CD8-positive, alpha-beta T cell (primary cell): ENCODE measurements at regions of chr20 and their contacts with region 1.

Region 1: GRCh38 chr20:62386383-62387218 is at the start of gene RPS21:
- DNase-seq: peak; percentile 86 to 97 (median 94)
- ATAC-seq: peak; percentile 88
- H3K4me3 ChIP-seq: peak within 1 kb of the TSS; percentile 93 to 96
- H3K4me3 Mint-ChIP-seq: peak within 1 kb of the TSS; percentile 91
- H3K27ac ChIP-seq: peak within 1 kb of the TSS; percentile 96 to 98
- H3K27ac Mint-ChIP-seq: peak within 1 kb of the TSS; percentile 95
- H3K4me1 ChIP-seq: peaks cover 37% of the 10 kb centered on the region
- H3K4me1 Mint-ChIP-seq: peaks cover 44% of the 10 kb centered on the region
- H3K27me3 ChIP-seq: no peaks in the 10 kb centered on the region
- H3K27me3 Mint-ChIP-seq: no peaks in the 10 kb centered on the region
- CTCF ChIP-seq: no peak
- total RNA-seq, gene RPS21: 3,441 to 3,445 TPM

Region 2: GRCh38 chr20:62065669-62066338 is 320.8 kb before region 1 on chr20 and contains the start of gene TAF4:
- CTCF ChIA-PET with region 1: no interaction called
- POLR2A ChIA-PET with region 1: no interaction called
- intact Hi-C with region 1: loop called in 1 of 2 experiments (anchors 5 kb)
- DNase-seq: peak; percentile 69 to 92 (median 79)
- ATAC-seq: peak; percentile 77
- H3K4me3 ChIP-seq: peak within 1 kb of the TSS; percentile 54 to 70
- H3K4me3 Mint-ChIP-seq: peak within 1 kb of the TSS; percentile 90
- H3K27ac ChIP-seq: peak within 1 kb of the TSS; percentile 47 to 74
- H3K27ac Mint-ChIP-seq: peak within 1 kb of the TSS; percentile 95
- H3K4me1 ChIP-seq: peaks cover 42% of the 10 kb centered on the region
- H3K4me1 Mint-ChIP-seq: peaks cover 52% of the 10 kb centered on the region
- H3K27me3 ChIP-seq: no peaks in the 10 kb centered on the region
- H3K27me3 Mint-ChIP-seq: no peaks in the 10 kb centered on the region
- CTCF ChIP-seq: no peak
- total RNA-seq, gene TAF4: 9.8 to 14.1 TPM

Region 3: GRCh38 chr20:62182613-62183425 is 203.8 kb before region 1 on chr20 and contains the start of gene MTG2:
- CTCF ChIA-PET with region 1: no interaction called
- POLR2A ChIA-PET with region 1: no interaction called
- intact Hi-C with region 1: loop called (anchors 2 kb)
- DNase-seq: peak; percentile 85 to 98 (median 95)
- ATAC-seq: peak; percentile 92
- H3K4me3 ChIP-seq: peak within 1 kb of the TSS; percentile 82 to 89
- H3K4me3 Mint-ChIP-seq: peak within 1 kb of the TSS; percentile 95
- H3K27ac ChIP-seq: peak within 1 kb of the TSS; percentile 89 to 93
- H3K27ac Mint-ChIP-seq: peak within 1 kb of the TSS; percentile 98
- H3K4me1 ChIP-seq: peaks cover 17% of the 10 kb centered on the region
- H3K4me1 Mint-ChIP-seq: peaks cover 43% of the 10 kb centered on the region
- H3K27me3 ChIP-seq: no peaks in the 10 kb centered on the region
- H3K27me3 Mint-ChIP-seq: no peaks in the 10 kb centered on the region
- CTCF ChIP-seq: no peak
- total RNA-seq, gene MTG2: 7.7 to 8.8 TPM

Region 4: DNA sequence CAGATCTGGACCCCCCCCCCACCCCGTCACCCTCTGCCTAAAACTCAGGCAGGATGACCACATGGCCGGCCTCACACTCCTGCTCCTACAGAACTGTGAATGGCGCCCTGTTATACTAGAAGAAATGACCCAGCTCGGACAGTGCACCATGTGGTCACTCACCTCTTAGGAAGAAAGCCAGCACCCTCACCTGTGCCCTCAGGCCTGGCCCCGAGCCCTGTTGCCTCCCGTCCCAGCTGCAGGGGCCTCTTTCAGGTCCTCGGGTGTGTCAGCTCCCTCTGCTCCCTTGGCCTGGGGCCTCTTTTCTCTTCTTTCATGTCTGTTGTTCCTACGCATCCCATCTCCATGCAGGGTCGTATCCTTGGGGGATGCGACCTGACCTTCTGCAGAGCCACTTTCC is 124.5 kb before region 1 on chr20:
- CTCF ChIA-PET with region 1: no interaction called
- POLR2A ChIA-PET with region 1: no interaction called
- intact Hi-C with region 1: no loop called
- DNase-seq: no peak
- ATAC-seq: no peak
- H3K4me3 ChIP-seq: no peak overlapping the region
- H3K4me3 Mint-ChIP-seq: no peak overlapping the region
- H3K27ac ChIP-seq: no peak overlapping the region
- H3K27ac Mint-ChIP-seq: no peak overlapping the region
- H3K4me1 ChIP-seq: no peaks in the 10 kb centered on the region
- H3K4me1 Mint-ChIP-seq: no peaks in the 10 kb centered on the region
- H3K27me3 ChIP-seq: no peaks in the 10 kb centered on the region
- H3K27me3 Mint-ChIP-seq: no peaks in the 10 kb centered on the region
- CTCF ChIP-seq: no peak

Region 5: DNA sequence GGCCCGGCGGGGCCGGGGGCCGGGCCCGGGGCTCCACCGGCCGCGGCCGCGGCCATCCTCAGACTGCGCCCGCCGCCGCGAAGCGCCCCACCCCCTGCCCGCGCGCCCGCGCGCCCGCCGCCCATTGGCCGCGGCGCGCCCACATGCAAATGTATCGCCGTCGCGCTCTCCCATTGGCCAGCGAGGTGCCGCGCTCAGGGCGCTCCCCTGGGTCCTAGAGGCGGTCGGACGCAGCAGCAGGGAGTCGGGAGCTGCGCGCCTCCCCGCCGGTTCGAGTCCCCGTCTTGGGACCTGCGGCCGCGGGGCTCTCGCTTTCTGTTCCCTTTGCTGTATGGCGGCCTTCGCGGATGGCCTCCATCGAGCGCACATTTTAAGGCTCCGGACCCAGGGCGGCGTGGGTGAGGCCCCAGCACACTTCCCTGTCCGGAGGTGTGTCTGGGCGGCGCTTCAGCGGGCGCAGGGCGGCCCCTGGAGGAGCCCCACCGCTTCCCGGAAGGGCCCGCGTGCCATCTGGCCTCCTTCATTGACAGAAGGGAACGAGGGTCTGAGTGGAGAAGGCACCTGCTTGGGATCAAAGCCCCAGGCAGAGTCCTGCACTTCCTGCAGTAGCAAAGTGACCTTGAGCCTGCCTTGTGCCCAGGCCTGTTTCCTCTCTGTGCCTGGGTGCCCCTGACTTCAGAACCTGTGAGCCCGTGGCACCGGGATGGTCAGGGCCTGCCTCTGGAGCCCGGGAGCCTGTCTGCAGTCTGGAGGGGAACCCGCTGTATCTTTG is 20.8 kb after region 1 on chr20 and contains the start of gene CABLES2:
- CTCF ChIA-PET with region 1: no interaction called
- POLR2A ChIA-PET with region 1: no interaction called
- intact Hi-C with region 1: loop called (anchors 1 kb)
- DNase-seq: peak; percentile 79 to 96 (median 90)
- ATAC-seq: peak; percentile 96
- H3K4me3 ChIP-seq: peak within 1 kb of the TSS; percentile 65 to 72
- H3K4me3 Mint-ChIP-seq: peak within 1 kb of the TSS; percentile 74
- H3K27ac ChIP-seq: peak within 1 kb of the TSS; percentile 33 to 54
- H3K27ac Mint-ChIP-seq: peak within 1 kb of the TSS; percentile 18
- H3K4me1 ChIP-seq: peaks cover 22% of the 10 kb centered on the region
- H3K4me1 Mint-ChIP-seq: peaks cover 26% of the 10 kb centered on the region
- H3K27me3 ChIP-seq: no peaks in the 10 kb centered on the region
- H3K27me3 Mint-ChIP-seq: no peaks in the 10 kb centered on the region
- CTCF ChIP-seq: no peak
- total RNA-seq, gene CABLES2: 4.5 to 5.1 TPM

Region 6: GRCh38 chr20:62418709-62419487 is 32.3 kb after region 1 on chr20:
- CTCF ChIA-PET with region 1: no interaction called
- POLR2A ChIA-PET with region 1: no interaction called
- intact Hi-C with region 1: no loop called
- DNase-seq: no peak
- ATAC-seq: no peak
- H3K4me3 ChIP-seq: no peak overlapping the region
- H3K4me3 Mint-ChIP-seq: no peak overlapping the region
- H3K27ac ChIP-seq: no peak overlapping the region
- H3K27ac Mint-ChIP-seq: no peak overlapping the region
- H3K4me1 ChIP-seq: no peaks in the 10 kb centered on the region
- H3K4me1 Mint-ChIP-seq: no peaks in the 10 kb centered on the region
- H3K27me3 ChIP-seq: no peaks in the 10 kb centered on the region
- H3K27me3 Mint-ChIP-seq: no peaks in the 10 kb centered on the region
- CTCF ChIP-seq: no peak

Region 7: DNA sequence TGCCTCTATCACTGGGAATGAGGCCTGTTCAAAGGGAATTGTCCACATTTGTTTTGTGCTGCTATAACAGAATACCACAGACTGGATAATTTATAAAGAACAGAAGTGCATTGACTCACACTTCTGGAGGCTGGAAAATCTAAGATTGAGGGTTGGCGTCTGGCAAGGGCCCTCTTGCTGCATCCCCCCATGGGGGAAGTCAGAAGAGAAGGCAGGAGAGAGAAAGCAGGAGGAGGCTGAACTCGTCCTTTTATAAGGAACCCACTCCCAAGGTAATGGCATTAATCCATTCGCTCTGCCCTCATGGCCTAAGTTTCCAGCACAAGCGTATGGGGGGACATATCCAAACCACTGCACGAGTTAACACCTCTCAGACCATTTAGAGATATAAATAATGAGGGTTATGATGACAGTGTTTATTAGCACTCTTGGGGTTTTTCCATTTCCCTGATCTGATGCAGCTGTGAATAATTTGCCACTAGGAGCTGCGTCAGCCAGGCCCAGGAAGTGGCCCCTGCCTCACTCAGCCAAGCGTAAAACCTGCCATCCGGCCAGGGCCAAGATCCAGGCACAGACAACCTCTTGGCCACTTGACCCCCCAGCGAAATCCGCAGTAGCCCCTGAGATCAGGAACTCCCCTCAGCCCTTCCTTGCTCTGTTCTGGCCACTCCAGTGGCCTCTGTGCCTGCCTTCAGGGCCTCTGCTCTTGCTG is 241.5 kb after region 1 on chr20:
- CTCF ChIA-PET with region 1: no interaction called
- POLR2A ChIA-PET with region 1: no interaction called
- intact Hi-C with region 1: no loop called
- DNase-seq: no peak
- ATAC-seq: no peak
- H3K4me3 ChIP-seq: no peak overlapping the region
- H3K4me3 Mint-ChIP-seq: no peak overlapping the region
- H3K27ac ChIP-seq: no peak overlapping the region
- H3K27ac Mint-ChIP-seq: no peak overlapping the region
- H3K4me1 ChIP-seq: peaks cover 12% of the 10 kb centered on the region
- H3K4me1 Mint-ChIP-seq: peaks cover 11% of the 10 kb centered on the region
- H3K27me3 ChIP-seq: no peaks in the 10 kb centered on the region
- H3K27me3 Mint-ChIP-seq: no peaks in the 10 kb centered on the region
- CTCF ChIP-seq: no peak

Region 8: DNA sequence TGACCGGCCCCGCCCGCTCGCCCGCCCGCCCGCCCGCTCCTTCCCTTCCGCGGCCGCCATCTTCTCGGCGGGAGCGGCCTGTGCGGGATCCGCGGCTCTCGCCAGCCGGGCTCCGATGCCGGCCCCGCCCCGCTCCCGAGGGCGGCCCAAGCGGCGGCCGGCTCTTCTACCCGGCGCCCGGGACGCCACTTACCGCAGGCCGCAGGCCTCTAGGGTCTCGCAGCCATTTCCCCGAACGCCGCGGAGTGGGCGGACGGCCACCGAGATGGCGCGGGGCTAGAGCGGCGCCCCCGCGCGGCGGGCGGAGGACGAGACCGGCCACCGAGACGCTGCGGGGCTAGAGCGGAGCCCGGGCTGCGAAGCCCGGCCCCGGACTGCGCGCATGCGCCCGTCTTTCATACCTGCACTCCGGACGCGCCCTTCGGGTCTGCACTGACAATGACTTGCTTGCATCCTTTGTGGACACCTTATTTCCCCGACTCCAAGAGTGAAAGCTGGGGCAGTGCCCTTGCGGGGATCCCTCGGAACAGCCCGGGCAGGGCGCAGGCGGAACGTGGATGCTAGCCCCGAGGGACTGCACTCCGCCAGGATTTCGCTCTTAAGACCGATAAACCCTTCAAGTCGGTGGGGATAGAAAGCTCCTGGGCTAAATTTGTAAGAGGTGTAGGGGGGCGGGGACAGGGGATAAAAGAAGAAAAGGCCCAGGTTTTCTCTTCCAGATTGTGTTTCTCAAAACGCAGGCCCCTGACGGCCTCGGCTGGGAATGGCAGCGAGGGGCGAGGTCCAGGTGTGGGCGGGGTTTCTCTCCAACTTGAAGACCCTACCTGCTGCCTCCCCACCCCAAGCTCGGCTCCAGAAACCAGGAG is 539.9 kb after region 1 on chr20 and contains the start of gene DIDO1:
- CTCF ChIA-PET with region 1: no interaction called
- POLR2A ChIA-PET with region 1: no interaction called
- intact Hi-C with region 1: loop called (anchors 5 to 10 kb)
- DNase-seq: peak; percentile 76 to 95 (median 91)
- ATAC-seq: peak; percentile 76
- H3K4me3 ChIP-seq: peak within 1 kb of the TSS; percentile 70 to 99
- H3K4me3 Mint-ChIP-seq: peak within 1 kb of the TSS; percentile 95
- H3K27ac ChIP-seq: peak within 1 kb of the TSS; percentile 75 to 96
- H3K27ac Mint-ChIP-seq: peak within 1 kb of the TSS; percentile 95
- H3K4me1 ChIP-seq: peaks cover 68% of the 10 kb centered on the region
- H3K4me1 Mint-ChIP-seq: peaks cover 75% of the 10 kb centered on the region
- H3K27me3 ChIP-seq: no peaks in the 10 kb centered on the region
- H3K27me3 Mint-ChIP-seq: no peaks in the 10 kb centered on the region
- CTCF ChIP-seq: peak; percentile 53
- total RNA-seq, gene DIDO1: 44.7 to 46.6 TPM